Posterior vena cava (tissue), 2 donors: ENCODE measurements at regions of chr3 and their contacts with region 1.

Region 1: DNA sequence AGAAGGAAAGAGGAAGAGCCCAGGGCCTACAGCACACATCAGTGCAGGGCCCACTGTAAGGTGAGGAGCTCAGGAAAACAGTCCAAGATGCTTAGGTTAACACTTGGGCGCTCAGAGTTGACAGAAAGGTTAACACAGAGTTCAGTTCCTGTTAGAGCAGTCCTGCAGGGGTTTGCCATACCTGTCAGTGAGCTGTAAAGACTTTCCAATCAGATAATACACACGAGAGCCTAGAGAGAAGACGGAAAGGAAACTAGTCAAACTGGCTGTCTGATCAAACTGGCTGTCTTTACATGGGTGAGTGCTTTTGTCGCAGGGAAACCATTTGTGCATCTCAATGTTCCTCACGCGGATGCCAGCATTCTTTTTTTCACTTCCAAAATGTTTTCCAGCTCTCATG is 61.4 kb upstream of the ARHGEF26 start:
- DNase-seq: no peak

Region 2: GRCh38 chr3:154081305-154081704 is 21.5 kb after region 1 on chr3:
- intact Hi-C with region 1: loop called in 1 of 2 experiments (anchors 2 kb)
- DNase-seq: no peak